ENCODE measurements at regions of chr15 and their contacts with region 1.

Region 1: DNA sequence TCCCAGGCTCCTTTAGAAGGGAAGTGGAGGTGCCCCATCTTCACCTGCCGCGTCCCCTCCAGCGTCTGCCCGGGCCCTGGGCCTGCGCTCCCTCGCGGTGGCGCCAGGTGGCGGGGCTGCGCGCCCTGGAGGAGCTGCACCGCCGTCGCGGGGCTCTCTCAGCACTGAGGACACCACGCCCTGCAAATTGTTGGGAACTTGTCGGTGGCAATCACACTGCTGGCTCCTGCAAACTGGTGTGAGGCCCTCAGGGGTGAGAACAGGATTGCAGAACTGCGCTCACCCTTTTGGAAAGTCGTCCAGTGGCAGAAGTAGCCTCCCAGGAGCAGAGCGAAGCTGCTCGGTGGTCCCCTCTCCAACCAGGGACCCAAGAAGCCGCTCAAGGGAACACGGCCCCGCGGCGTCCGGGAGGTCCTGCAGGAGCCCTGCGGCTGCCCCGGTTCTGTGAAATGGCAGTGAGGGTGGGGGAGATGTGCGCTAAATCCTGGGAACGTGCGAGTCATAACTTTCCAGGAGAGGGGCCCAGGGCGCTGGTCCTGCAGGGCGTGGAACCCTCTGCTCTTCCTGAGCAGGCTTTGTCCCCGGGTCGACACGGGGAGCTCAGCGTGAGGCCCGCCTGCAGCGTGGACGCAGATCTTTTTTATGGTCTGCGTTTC is 995 bp upstream of the LRRK1 start:
- DNase-seq: peak in 8 of 9 donors; percentile 26 to 81 (median 52)
- ATAC-seq: peak; percentile 89
- H3K4me3 ChIP-seq: peak overlapping the region; percentile 53
- H3K4me3 Mint-ChIP-seq: peak overlapping the region; percentile 73 to 89 (median 84)
- H3K27ac ChIP-seq: no peak overlapping the region
- H3K27ac Mint-ChIP-seq: no peak overlapping the region
- H3K4me1 ChIP-seq: no peaks in the 10 kb centered on the region
- H3K4me1 Mint-ChIP-seq: peaks cover 9 to 29% (median 18%) of the 10 kb centered on the region in 7 donors
- H3K27me3 ChIP-seq: peaks cover 0 to 16% of the 10 kb centered on the region in 2 donors
- H3K27me3 Mint-ChIP-seq: peaks cover 63 to 77% (median 73%) of the 10 kb centered on the region in 5 donors

Region 2: DNA sequence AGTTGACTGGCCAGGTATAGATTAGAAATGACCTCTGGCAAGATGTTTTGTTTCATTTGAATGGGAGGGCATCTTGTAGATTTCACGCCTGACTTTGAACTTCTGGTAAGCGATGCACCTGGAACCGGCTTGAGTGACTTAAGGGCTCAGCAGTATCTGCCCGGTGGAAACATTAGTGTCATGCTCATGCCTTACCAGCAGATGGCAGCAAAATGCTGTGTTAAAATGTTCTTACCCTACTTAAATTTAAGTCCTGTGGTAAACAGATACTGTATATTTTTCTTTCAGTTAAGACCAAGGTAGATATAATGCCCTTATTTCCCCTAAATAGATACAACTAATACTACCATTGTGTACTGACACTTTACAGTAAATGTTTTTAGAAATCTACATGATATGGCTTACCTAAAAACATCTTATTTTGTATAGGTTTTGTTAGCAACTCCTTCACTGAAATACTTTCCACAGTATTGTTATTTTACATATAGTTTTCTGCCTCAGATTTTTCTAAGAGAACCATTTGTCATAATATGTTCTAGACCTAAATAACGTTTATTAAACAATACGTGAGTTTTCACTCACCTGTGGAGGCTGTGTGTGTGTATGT is 290.3 kb before region 1 on chr15:
- CTCF ChIA-PET with region 1: no interaction called
- POLR2A ChIA-PET with region 1: no interaction called
- intact Hi-C with region 1: loop called in 1 of 2 experiments (anchors 5 kb)
- DNase-seq: peak; percentile 26 to 73 (median 63)
- ATAC-seq: peak; percentile 95
- H3K4me3 ChIP-seq: no peak overlapping the region
- H3K4me3 Mint-ChIP-seq: no peak overlapping the region
- H3K27ac ChIP-seq: no peak overlapping the region
- H3K27ac Mint-ChIP-seq: peak overlapping the region in 7 of 9 donors; percentile 10 to 57 (median 38)
- H3K4me1 ChIP-seq: no peaks in the 10 kb centered on the region
- H3K4me1 Mint-ChIP-seq: peaks cover 17 to 46% (median 33%) of the 10 kb centered on the region in 7 donors
- H3K27me3 ChIP-seq: no peaks in the 10 kb centered on the region
- H3K27me3 Mint-ChIP-seq: no peaks in the 10 kb centered on the region

Region 3: GRCh38 chr15:100873029-100873677 is 45.0 kb before region 1 on chr15:
- CTCF ChIA-PET with region 1: no interaction called
- POLR2A ChIA-PET with region 1: no interaction called
- intact Hi-C with region 1: no loop called
- DNase-seq: peak in 8 of 9 donors; percentile 10 to 59 (median 48)
- ATAC-seq: peak; percentile 83
- H3K4me3 ChIP-seq: no peak overlapping the region
- H3K4me3 Mint-ChIP-seq: no peak overlapping the region
- H3K27ac ChIP-seq: no peak overlapping the region
- H3K27ac Mint-ChIP-seq: no peak overlapping the region
- H3K4me1 ChIP-seq: no peaks in the 10 kb centered on the region
- H3K4me1 Mint-ChIP-seq: no peaks in the 10 kb centered on the region
- H3K27me3 ChIP-seq: peaks cover 0 to under 1% of the 10 kb centered on the region in 2 donors
- H3K27me3 Mint-ChIP-seq: peaks cover 14 to 43% (median 27%) of the 10 kb centered on the region in 5 donors

Region 4: GRCh38 chr15:101152914-101153313 is 234.8 kb after region 1 on chr15:
- CTCF ChIA-PET with region 1: no interaction called
- POLR2A ChIA-PET with region 1: no interaction called
- intact Hi-C with region 1: no loop called
- DNase-seq: no peak
- ATAC-seq: no peak
- H3K4me3 ChIP-seq: no peak overlapping the region
- H3K4me3 Mint-ChIP-seq: no peak overlapping the region
- H3K27ac ChIP-seq: no peak overlapping the region
- H3K27ac Mint-ChIP-seq: no peak overlapping the region
- H3K4me1 ChIP-seq: no peaks in the 10 kb centered on the region
- H3K4me1 Mint-ChIP-seq: peaks cover 7 to 36% (median 13%) of the 10 kb centered on the region in 7 donors
- H3K27me3 ChIP-seq: no peaks in the 10 kb centered on the region
- H3K27me3 Mint-ChIP-seq: no peaks in the 10 kb centered on the region

Region 5: GRCh38 chr15:101251830-101252820 is 334.0 kb after region 1 on chr15 and contains the start of gene CHSY1:
- CTCF ChIA-PET with region 1: no interaction called
- POLR2A ChIA-PET with region 1: no interaction called
- intact Hi-C with region 1: loop called in 1 of 2 experiments (anchors 10 kb)
- DNase-seq: peak; percentile 71 to 91 (median 81)
- ATAC-seq: peak; percentile 91
- H3K4me3 ChIP-seq: peak within 1 kb of the TSS; percentile 64
- H3K4me3 Mint-ChIP-seq: peak within 1 kb of the TSS; percentile 84 to 97 (median 94)
- H3K27ac ChIP-seq: peak within 1 kb of the TSS; percentile 62
- H3K27ac Mint-ChIP-seq: peak within 1 kb of the TSS; percentile 77 to 96 (median 84)
- H3K4me1 ChIP-seq: peaks cover 17 to 21% of the 10 kb centered on the region in 2 donors
- H3K4me1 Mint-ChIP-seq: peaks cover 17 to 63% (median 37%) of the 10 kb centered on the region in 7 donors
- H3K27me3 ChIP-seq: no peaks in the 10 kb centered on the region
- H3K27me3 Mint-ChIP-seq: no peaks in the 10 kb centered on the region
- total RNA-seq, gene CHSY1: 8.9 to 47.0 (median 10.8) TPM